WTC11 (cell line): ENCODE measurements at regions of chr5 and their contacts with region 1.

Region 1: DNA sequence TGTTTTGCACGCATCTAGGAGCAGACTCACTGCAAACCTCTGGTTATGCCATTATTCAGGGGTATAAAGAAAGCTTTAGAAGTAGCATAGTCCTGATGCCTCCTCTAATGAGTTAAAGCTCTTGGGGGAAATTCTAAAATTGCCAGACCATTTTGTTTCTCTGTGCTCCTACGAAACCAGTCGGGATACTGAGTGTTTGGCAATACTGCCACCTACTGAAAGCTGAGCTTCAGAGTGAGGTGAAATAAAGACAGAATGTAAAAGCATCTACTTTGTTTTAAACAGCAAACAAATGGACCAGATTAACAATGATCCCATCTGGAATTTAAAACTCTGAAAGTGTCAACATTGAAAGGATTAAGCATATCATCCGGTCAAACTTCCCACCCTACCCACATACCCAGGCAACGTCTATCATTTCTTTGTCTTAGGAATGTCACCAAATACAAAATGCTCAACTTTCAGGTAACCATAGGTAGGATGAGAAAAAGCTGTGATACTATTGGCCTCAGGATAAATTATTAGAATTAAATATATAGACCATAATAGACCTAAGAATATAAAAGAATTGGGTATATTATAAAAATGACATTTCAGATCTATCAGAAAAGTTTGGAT is 77.8 kb upstream of the SHISAL2B start:
- DNase-seq: peak; percentile 38
- ATAC-seq: peak; percentile 82
- H3K4me3 Mint-ChIP-seq: no peak overlapping the region
- H3K27ac Mint-ChIP-seq: no peak overlapping the region
- H3K4me1 Mint-ChIP-seq: peaks cover 5% of the 10 kb centered on the region
- H3K27me3 Mint-ChIP-seq: no peaks in the 10 kb centered on the region
- CTCF ChIP-seq: peak; percentile 57

Region 2: DNA sequence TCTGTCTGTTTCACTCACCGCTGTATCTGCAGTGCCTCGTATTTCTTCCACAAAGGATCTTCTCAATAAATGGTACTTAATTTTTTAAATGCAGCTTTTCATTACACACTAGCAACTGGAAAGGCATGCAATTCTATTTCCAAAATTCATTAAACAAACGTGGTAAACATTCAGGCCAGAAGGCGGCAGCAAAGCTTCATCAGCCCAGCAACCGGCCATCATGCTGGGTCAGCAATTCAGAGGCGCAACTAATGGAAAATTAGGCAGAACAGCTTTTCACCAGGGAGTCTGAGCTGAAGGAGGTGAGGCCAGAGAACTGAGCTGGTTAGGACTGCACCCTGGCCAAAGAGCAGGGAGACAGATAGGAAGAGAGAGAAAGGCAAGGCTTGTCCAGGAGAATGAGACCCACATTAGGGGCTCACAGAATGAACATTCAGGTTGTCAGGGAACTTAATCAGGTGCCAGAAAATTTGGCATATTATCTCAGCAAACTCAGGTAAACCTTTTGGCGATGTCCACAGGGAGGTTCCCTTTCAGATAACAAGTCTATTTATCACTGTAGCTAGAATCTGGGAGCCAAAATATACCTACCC is 464.5 kb before region 1 on chr5:
- CTCF ChIA-PET with region 1: interaction called, 15 read pairs
- POLR2A ChIA-PET with region 1: no interaction called
- DNase-seq: peak; percentile 68
- ATAC-seq: peak; percentile 92
- H3K4me3 Mint-ChIP-seq: no peak overlapping the region
- H3K27ac Mint-ChIP-seq: no peak overlapping the region
- H3K4me1 Mint-ChIP-seq: no peaks in the 10 kb centered on the region
- H3K27me3 Mint-ChIP-seq: no peaks in the 10 kb centered on the region
- CTCF ChIP-seq: peak; percentile 51

Region 3: DNA sequence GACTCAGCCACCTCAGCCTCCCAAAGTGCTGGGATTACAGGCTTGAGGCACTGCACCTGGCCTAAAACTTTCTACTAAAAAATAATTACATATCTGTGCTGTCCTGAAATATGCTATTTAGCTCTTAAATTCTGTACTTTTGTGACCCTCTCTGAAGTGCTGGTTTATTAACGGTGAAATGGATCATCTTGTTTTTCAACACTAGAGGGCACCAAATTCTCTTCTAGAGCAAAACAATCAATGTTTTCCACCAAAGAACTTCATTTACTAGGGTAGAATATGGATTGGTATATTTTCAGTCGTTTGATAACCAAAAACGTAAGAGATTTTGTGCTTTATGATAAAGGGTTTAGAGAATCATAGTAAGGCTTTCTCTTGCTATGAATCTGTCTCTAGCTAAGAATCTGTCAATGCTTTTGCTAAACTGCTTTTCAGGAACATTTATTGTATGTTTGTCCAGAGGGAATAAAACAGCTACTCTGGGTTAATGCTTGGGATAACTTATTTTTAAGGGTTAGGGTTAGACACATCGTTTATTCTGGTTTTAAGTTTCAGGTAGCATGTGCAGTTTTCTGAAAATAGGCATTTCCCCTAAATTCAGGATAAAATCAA is 383.2 kb before region 1 on chr5:
- CTCF ChIA-PET with region 1: interaction called, 31 read pairs
- POLR2A ChIA-PET with region 1: no interaction called
- DNase-seq: no peak
- ATAC-seq: peak; percentile 56; the same call in 1 of the 2 replicates
- H3K4me3 Mint-ChIP-seq: no peak overlapping the region
- H3K27ac Mint-ChIP-seq: no peak overlapping the region
- H3K4me1 Mint-ChIP-seq: no peaks in the 10 kb centered on the region
- H3K27me3 Mint-ChIP-seq: no peaks in the 10 kb centered on the region
- CTCF ChIP-seq: peak; percentile 44

Region 4: GRCh38 chr5:64347309-64347708 is 265.1 kb before region 1 on chr5:
- CTCF ChIA-PET with region 1: interaction called, 24 read pairs
- POLR2A ChIA-PET with region 1: no interaction called
- DNase-seq: no peak
- ATAC-seq: no peak; the same call in 1 of the 2 replicates
- H3K4me3 Mint-ChIP-seq: no peak overlapping the region
- H3K27ac Mint-ChIP-seq: no peak overlapping the region
- H3K4me1 Mint-ChIP-seq: no peaks in the 10 kb centered on the region
- H3K27me3 Mint-ChIP-seq: no peaks in the 10 kb centered on the region
- CTCF ChIP-seq: no peak

Region 5: DNA sequence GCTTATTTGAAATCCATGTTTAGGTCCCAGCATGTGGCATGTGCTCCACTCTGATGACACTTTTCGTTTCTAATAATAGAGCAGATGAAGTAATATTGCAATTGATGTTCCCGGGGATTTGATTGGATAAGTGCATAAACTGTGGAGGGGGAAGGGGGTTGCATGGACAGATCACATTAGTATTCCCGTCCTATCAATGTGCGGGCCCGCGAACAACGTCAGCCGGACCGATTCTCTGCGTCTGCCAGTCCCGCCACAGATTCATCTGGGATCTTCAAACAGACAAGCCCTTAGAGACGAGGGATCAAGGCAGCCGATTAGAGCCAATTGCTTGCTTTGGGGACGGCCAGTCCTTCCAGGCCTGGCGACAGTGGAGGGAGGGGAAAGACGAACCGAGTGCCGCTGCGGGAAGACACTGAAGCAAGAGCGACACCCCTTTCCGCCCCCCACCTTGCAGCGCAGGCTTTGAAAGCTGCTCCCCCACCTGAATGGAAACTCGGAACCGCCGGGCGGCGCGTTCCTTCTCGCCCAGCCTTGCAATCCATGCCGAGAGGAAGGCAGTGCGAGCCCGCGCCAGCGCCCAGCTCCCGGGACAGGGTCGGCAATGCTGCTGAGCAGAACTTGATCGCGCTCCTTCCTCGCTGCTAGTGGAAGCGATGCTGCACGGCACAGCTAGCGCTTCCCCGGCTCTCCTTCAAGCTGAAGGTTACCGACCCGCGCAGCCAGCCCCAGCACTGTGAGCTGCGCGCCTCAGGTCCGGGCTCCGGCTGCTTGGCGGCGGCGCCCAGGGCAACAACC is 106.5 kb before region 1 on chr5 and contains the start of gene RGS7BP:
- CTCF ChIA-PET with region 1: interaction called, 10 read pairs
- POLR2A ChIA-PET with region 1: no interaction called
- DNase-seq: peak; percentile 75
- ATAC-seq: peak; percentile 74
- H3K4me3 Mint-ChIP-seq: peak within 1 kb of the TSS; percentile 88
- H3K27ac Mint-ChIP-seq: peak within 1 kb of the TSS; percentile 55; the same call in 1 of the 2 replicates
- H3K4me1 Mint-ChIP-seq: peaks cover 32% of the 10 kb centered on the region
- H3K27me3 Mint-ChIP-seq: peaks cover 46% of the 10 kb centered on the region
- CTCF ChIP-seq: no peak
- total RNA-seq, gene RGS7BP: 1.7 to 5.1 TPM (median 3.4 TPM) in 3 replicates

Region 6: DNA sequence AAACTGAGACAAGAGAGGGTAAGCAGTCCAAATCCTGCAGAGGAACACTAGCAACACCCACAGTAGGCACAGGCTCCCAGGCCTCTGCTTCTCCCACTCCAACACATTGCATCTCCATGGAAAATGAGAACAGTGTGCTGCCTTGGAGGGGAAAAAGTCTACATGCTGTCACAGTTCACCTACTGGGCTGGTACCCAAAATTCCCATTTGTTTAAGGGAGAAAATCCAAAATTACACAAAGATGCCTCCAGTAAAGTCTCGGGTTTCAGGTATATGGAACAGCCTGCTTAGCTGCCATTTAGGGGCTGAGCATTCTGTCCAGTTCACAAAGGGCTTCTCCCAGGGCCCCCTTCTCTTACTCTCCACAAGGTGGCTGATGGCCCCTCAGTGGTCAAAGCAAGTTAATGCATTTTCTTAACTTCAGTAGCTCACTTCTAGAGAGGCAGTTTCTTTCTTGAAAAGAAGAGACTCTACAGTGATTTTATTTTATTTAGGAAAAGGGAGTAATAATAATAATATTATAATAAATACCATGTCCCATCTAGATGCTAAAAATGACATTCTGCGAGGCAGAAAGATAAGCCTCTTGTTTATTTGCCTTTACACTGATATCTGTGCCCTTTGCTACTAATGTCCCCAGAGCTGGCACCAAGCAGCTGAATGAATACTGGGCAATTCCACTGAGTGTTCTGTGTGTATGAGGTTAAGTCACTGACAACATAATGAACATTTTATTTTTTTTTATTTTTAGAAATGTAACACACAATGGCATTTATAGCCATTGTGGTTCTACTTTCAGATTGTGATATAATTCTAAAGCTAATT is 17.2 kb before region 1 on chr5:
- CTCF ChIA-PET with region 1: interaction called, 42 read pairs
- POLR2A ChIA-PET with region 1: interaction called, 4 read pairs
- DNase-seq: peak; percentile 52
- ATAC-seq: peak; percentile 90
- H3K4me3 Mint-ChIP-seq: no peak overlapping the region
- H3K27ac Mint-ChIP-seq: no peak overlapping the region
- H3K4me1 Mint-ChIP-seq: peaks cover 23% of the 10 kb centered on the region
- H3K27me3 Mint-ChIP-seq: no peaks in the 10 kb centered on the region
- CTCF ChIP-seq: no peak

Region 7: GRCh38 chr5:64646169-64646568 is 33.7 kb after region 1 on chr5:
- CTCF ChIA-PET with region 1: no interaction called
- POLR2A ChIA-PET with region 1: no interaction called
- DNase-seq: no peak
- ATAC-seq: no peak; the same call in 1 of the 2 replicates
- H3K4me3 Mint-ChIP-seq: no peak overlapping the region
- H3K27ac Mint-ChIP-seq: no peak overlapping the region
- H3K4me1 Mint-ChIP-seq: peaks cover 18% of the 10 kb centered on the region
- H3K27me3 Mint-ChIP-seq: no peaks in the 10 kb centered on the region
- CTCF ChIP-seq: no peak

Region 8: GRCh38 chr5:65382582-65382981 is 770.1 kb after region 1 on chr5:
- CTCF ChIA-PET with region 1: no interaction called
- POLR2A ChIA-PET with region 1: no interaction called
- DNase-seq: no peak
- ATAC-seq: no peak; the same call in 1 of the 2 replicates
- H3K4me3 Mint-ChIP-seq: no peak overlapping the region
- H3K27ac Mint-ChIP-seq: no peak overlapping the region
- H3K4me1 Mint-ChIP-seq: no peaks in the 10 kb centered on the region
- H3K27me3 Mint-ChIP-seq: no peaks in the 10 kb centered on the region
- CTCF ChIP-seq: no peak